ENCODE measurements at regions of chr15 and their contacts with region 1.

Region 1: GRCh38 chr15:65773386-65774111 is 18.5 kb downstream of the DENND4A start:
- DNase-seq: peak; percentile 45
- H3K4me3 ChIP-seq: peak overlapping the region; percentile 1
- H3K27ac ChIP-seq: peak overlapping the region; percentile 56
- H3K4me1 ChIP-seq: peaks cover 68% of the 10 kb centered on the region
- CTCF ChIP-seq: no peak

Region 2: GRCh38 chr15:64766058-64766457 is 1007.5 kb before region 1 on chr15:
- CTCF ChIA-PET with region 1: no interaction called
- POLR2A ChIA-PET with region 1: no interaction called
- intact Hi-C with region 1: no loop called
- DNase-seq: no peak
- H3K4me3 ChIP-seq: no peak overlapping the region
- H3K27ac ChIP-seq: no peak overlapping the region
- H3K4me1 ChIP-seq: no peaks in the 10 kb centered on the region
- CTCF ChIP-seq: no peak

Region 3: DNA sequence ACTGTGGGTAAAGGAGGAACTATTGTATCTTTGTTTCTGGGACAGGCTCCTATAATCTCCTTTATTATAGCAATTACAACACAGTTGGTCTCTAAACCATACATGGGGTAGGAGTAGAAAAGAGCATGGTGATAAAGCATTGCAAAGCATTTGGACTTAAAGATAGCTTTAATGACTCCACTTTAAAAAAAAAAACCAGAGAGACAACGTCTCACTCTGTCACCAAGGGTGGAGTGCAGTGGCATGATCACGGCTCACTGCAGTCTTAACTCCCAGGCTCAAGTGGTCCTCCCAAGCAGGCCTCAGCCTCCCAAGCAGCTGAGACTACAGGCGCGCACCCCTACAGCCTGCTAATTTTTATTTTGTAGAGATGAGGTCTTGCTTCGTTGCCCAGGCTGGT is 49.7 kb before region 1 on chr15:
- CTCF ChIA-PET with region 1: no interaction called
- POLR2A ChIA-PET with region 1: interaction called, 11 read pairs
- intact Hi-C with region 1: no loop called
- DNase-seq: no peak
- H3K4me3 ChIP-seq: no peak overlapping the region
- H3K27ac ChIP-seq: no peak overlapping the region
- H3K4me1 ChIP-seq: no peaks in the 10 kb centered on the region
- CTCF ChIP-seq: no peak

Region 4: DNA sequence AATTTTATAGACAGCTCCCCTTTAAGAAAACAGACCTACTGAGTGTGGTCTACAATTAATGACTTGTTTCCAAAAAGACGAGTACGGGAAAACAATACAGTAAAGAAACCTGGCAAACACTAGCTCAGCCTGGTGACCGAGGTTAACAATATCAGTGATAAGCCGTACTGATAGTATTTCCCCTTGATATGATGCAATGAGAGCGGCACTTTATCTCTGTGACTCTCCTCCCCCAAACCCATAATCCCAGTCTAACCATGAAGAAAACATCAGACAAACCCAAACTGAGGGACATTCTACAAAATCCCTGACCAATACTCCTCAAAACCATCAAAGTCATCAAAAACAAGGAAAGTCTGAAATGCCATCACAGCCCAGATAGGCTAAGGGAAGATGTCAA is 10.3 kb after region 1 on chr15:
- CTCF ChIA-PET with region 1: no interaction called
- POLR2A ChIA-PET with region 1: interaction called, 12 read pairs
- intact Hi-C with region 1: no loop called
- DNase-seq: no peak
- H3K4me3 ChIP-seq: no peak overlapping the region
- H3K27ac ChIP-seq: no peak overlapping the region
- H3K4me1 ChIP-seq: peaks cover 34% of the 10 kb centered on the region
- CTCF ChIP-seq: no peak

Region 5: DNA sequence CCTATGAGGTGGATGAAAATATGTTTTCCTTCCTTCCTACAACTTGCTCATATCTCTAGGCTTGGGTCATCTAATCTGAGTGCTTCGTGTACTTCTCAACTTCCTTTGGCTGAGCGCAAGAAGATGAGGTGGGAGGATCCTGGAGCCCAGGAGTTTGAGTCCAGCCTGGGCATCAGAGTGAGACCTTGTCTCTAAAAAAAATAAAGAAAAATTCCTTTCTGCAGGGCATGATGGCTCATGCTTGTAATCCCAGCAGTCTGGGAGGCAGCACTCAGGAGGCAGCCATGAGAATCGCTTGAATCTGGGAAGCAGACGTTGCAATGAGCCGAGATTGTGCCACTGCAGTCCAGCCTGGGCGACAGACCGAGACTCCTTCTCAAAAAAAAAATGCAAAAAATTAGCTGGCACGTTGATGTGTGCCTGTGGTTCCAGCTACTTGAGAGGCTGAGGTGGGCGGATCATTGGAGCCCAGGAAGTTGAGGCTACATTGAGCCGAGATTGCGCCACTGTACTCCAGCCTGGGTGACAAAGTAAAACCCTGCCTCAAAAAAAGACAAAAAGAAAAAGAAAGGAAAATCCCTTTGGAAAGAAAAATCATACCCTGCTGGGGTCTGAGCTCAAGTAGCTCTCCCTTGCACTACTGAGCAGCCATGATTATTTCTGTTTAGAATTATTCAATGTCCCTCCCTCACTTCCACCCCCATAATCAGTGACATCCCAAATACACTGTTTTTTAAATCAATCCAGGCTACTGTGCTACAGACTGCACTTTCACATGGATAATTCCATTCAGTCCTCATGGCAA is 67.8 kb after region 1 on chr15:
- CTCF ChIA-PET with region 1: no interaction called
- POLR2A ChIA-PET with region 1: interaction called, 11 read pairs
- intact Hi-C with region 1: no loop called
- DNase-seq: no peak
- H3K4me3 ChIP-seq: no peak overlapping the region
- H3K27ac ChIP-seq: no peak overlapping the region
- H3K4me1 ChIP-seq: no peaks in the 10 kb centered on the region
- CTCF ChIP-seq: no peak

Region 6: DNA sequence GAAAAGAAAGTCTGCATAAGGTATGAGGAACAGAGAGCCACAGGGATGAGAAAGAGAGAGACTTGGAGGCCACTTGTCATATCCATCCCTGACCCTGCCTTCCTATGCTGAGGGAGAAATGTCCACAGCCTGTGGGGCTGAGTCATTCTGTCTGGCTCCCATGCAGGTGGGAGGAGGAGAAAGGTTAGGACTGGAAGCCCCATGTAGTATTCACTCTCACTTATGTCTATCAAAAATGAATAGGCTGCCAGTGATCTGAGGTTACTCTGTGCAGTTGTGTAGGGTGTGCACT is 167.0 kb after region 1 on chr15:
- CTCF ChIA-PET with region 1: no interaction called
- POLR2A ChIA-PET with region 1: no interaction called
- intact Hi-C with region 1: no loop called
- DNase-seq: no peak
- H3K4me3 ChIP-seq: no peak overlapping the region
- H3K27ac ChIP-seq: no peak overlapping the region
- H3K4me1 ChIP-seq: no peaks in the 10 kb centered on the region
- CTCF ChIP-seq: no peak

Measured in OCI-LY7 (cell line).